MCF 10A (cell line): ENCODE measurements at regions of chr15 and their contacts with region 1.

Region 1: GRCh38 chr15:100614918-100615317 is 12.5 kb downstream of the ASB7 start:
- DNase-seq: no peak
- H3K4me3 Mint-ChIP-seq: no peak overlapping the region
- H3K27ac Mint-ChIP-seq: no peak overlapping the region
- H3K4me1 Mint-ChIP-seq: no peaks in the 10 kb centered on the region
- H3K27me3 Mint-ChIP-seq: no peaks in the 10 kb centered on the region
- CTCF ChIP-seq: no peak

Region 2: GRCh38 chr15:100588638-100589242 is 26.2 kb before region 1 on chr15:
- CTCF ChIA-PET with region 1: no interaction called
- POLR2A ChIA-PET with region 1: no interaction called
- intact Hi-C with region 1: no loop called
- DNase-seq: peak; percentile 28
- H3K4me3 Mint-ChIP-seq: no peak overlapping the region
- H3K27ac Mint-ChIP-seq: no peak overlapping the region
- H3K4me1 Mint-ChIP-seq: no peaks in the 10 kb centered on the region
- H3K27me3 Mint-ChIP-seq: no peaks in the 10 kb centered on the region
- CTCF ChIP-seq: no peak

Region 3: DNA sequence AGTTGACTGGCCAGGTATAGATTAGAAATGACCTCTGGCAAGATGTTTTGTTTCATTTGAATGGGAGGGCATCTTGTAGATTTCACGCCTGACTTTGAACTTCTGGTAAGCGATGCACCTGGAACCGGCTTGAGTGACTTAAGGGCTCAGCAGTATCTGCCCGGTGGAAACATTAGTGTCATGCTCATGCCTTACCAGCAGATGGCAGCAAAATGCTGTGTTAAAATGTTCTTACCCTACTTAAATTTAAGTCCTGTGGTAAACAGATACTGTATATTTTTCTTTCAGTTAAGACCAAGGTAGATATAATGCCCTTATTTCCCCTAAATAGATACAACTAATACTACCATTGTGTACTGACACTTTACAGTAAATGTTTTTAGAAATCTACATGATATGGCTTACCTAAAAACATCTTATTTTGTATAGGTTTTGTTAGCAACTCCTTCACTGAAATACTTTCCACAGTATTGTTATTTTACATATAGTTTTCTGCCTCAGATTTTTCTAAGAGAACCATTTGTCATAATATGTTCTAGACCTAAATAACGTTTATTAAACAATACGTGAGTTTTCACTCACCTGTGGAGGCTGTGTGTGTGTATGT is 13.0 kb after region 1 on chr15:
- CTCF ChIA-PET with region 1: interaction called, 10 read pairs
- POLR2A ChIA-PET with region 1: no interaction called
- intact Hi-C with region 1: no loop called
- DNase-seq: peak; percentile 78
- H3K4me3 Mint-ChIP-seq: no peak overlapping the region
- H3K27ac Mint-ChIP-seq: peak overlapping the region; percentile 41
- H3K4me1 Mint-ChIP-seq: peaks cover 6% of the 10 kb centered on the region
- H3K27me3 Mint-ChIP-seq: no peaks in the 10 kb centered on the region
- CTCF ChIP-seq: peak; percentile 84

Region 4: DNA sequence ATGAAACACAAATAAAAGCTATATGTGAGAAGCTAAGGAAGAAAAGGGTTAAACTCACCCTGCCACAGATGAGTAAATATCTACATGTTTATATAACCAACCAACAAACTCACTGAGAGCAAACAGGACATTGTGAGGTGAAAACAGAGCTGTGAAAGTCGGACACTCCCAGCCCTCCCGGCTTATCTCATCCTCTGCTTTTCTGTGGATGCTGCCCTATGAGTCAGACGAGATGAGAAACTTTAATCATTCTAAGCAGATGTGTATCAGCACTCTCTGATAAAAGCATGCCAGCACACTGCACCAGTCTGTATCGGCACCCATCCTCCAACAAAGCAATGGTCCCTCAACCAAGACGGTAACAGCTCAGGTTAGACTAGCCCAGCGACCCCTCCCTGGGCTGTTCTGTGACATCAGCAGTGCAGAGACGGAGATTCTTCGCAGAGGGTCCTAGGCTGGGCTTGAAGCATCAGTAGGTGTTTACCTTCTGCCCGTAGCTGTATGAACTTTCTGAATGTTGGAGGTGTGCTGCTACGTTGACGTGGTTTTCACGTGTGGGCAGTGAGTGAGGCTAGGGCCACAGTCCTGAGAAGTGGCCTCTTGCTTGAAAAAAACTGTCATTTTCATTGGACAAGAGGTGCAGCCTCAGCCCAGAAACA is 144.9 kb after region 1 on chr15:
- CTCF ChIA-PET with region 1: no interaction called
- POLR2A ChIA-PET with region 1: no interaction called
- intact Hi-C with region 1: no loop called
- DNase-seq: peak; percentile 18
- H3K4me3 Mint-ChIP-seq: no peak overlapping the region
- H3K27ac Mint-ChIP-seq: no peak overlapping the region
- H3K4me1 Mint-ChIP-seq: peaks cover 9% of the 10 kb centered on the region
- H3K27me3 Mint-ChIP-seq: no peaks in the 10 kb centered on the region
- CTCF ChIP-seq: no peak